Activated CD4-positive, alpha-beta memory T cell treated with anti-CD3 and anti-CD28 coated beads, Interleukin-2, amount 10 ng/mL, durations not matched to agents 7 days and 5 days (primary cell): ENCODE measurements at regions of chr20 and their contacts with region 1.

Region 1: GRCh38 chr20:64079273-64080012 is at the start of gene RGS19:
- DNase-seq: peak; percentile 81
- H3K4me3 Mint-ChIP-seq: peak within 1 kb of the TSS; percentile 93
- H3K27ac Mint-ChIP-seq: peak within 1 kb of the TSS; percentile 92
- H3K4me1 Mint-ChIP-seq: peaks cover 54% of the 10 kb centered on the region
- H3K27me3 Mint-ChIP-seq: peaks cover 19% of the 10 kb centered on the region
- total RNA-seq, gene RGS19: 119 to 122 TPM

Region 2: GRCh38 chr20:63858393-63859165 is 220.9 kb before region 1 on chr20:
- CTCF ChIA-PET with region 1: no interaction called
- POLR2A ChIA-PET with region 1: no interaction called
- DNase-seq: no peak
- H3K4me3 Mint-ChIP-seq: no peak overlapping the region
- H3K27ac Mint-ChIP-seq: no peak overlapping the region
- H3K4me1 Mint-ChIP-seq: peaks cover 23% of the 10 kb centered on the region
- H3K27me3 Mint-ChIP-seq: no peaks in the 10 kb centered on the region

Region 3: GRCh38 chr20:64062596-64063388 is 16.7 kb before region 1 on chr20 and contains the start of gene TCEA2:
- CTCF ChIA-PET with region 1: interaction called, 12 read pairs
- POLR2A ChIA-PET with region 1: interaction called, 74 read pairs
- DNase-seq: peak; percentile 97
- H3K4me3 Mint-ChIP-seq: peak within 1 kb of the TSS; percentile 82
- H3K27ac Mint-ChIP-seq: peak within 1 kb of the TSS; percentile 89
- H3K4me1 Mint-ChIP-seq: peaks cover 65% of the 10 kb centered on the region
- H3K27me3 Mint-ChIP-seq: no peaks in the 10 kb centered on the region
- total RNA-seq, gene TCEA2: 66.3 to 74.1 TPM

Region 4: DNA sequence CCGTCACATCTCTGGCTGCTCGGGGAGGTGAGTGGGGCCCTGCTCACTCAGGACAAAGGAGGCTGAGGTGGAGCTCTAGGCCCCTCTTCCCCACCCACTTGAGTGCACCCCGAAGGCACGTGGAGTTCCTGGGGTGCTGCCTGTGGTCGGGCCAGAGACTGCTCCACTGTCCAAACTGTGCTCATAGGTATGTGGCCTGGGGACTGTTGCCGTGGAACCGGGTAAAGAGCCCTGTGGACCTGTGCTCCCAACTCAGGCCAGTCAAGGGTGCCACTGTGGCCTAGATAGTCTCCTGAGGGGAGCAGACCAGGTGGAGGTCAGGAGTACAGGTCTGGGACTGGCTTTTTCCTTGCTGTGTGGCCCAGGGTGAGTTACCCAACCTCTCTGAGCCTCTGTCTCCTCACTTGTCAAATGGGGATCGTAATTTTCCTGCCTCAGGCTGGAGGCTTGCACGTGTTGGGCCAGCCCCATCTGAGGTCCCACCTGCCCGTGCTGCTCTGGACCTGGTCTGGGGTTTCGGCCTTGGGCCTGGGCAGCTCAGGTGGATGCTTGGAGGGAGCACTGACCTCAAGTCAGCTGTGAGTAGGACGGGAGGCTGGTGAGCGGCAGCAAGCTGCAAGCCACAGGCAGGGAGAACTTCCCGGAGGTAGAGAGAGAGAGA is 40.4 kb after region 1 on chr20:
- CTCF ChIA-PET with region 1: interaction called, 34 read pairs
- POLR2A ChIA-PET with region 1: interaction called, 10 read pairs
- DNase-seq: no peak
- H3K4me3 Mint-ChIP-seq: peak overlapping the region; percentile 37
- H3K27ac Mint-ChIP-seq: no peak overlapping the region
- H3K4me1 Mint-ChIP-seq: peaks cover 10% of the 10 kb centered on the region
- H3K27me3 Mint-ChIP-seq: peaks cover 18% of the 10 kb centered on the region